HCT116 (cell line): ENCODE measurements at regions of chr11 and their contacts with region 1.

Region 1: GRCh38 chr11:5712507-5712906 is 22.9 kb downstream of the TRIM22 start:
- DNase-seq: peak; percentile 7
- ATAC-seq: peak; percentile 57
- H3K4me3 ChIP-seq: no peak overlapping the region
- H3K27ac ChIP-seq: no peak overlapping the region
- H3K4me1 ChIP-seq: no peaks in the 10 kb centered on the region
- H3K27me3 ChIP-seq: peaks cover 36% of the 10 kb centered on the region
- CTCF ChIP-seq: peak; percentile 41 to 60 (median 56); a peak in 5 of 6 replicates
- POLR2A ChIP-seq: no peak
- RAD21 ChIP-seq: peak; percentile 71

Region 2: GRCh38 chr11:5600374-5600851 is 112.1 kb before region 1 on chr11:
- CTCF ChIA-PET with region 1: no interaction called
- POLR2A ChIA-PET with region 1: no interaction called
- RAD21 ChIA-PET with region 1: no interaction called
- intact Hi-C with region 1: loop called (anchors 5 kb)
- DNase-seq: peak; percentile 81
- ATAC-seq: peak; percentile 84
- H3K4me3 ChIP-seq: no peak overlapping the region
- H3K27ac ChIP-seq: no peak overlapping the region
- H3K4me1 ChIP-seq: peaks cover 3 to 25% of the 10 kb centered on the region in 2 experiments; a peak in 3 of 4 replicates
- H3K27me3 ChIP-seq: no peaks in the 10 kb centered on the region
- CTCF ChIP-seq: peak; percentile 85 to 98 (median 95)
- POLR2A ChIP-seq: no peak
- RAD21 ChIP-seq: peak; percentile 66